ENCODE measurements at regions of chr16 and their contacts with region 1.

Region 1: GRCh38 chr16:27313422-27314160 is at the start of gene IL4R:
- DNase-seq: peak; percentile 82
- H3K4me3 Mint-ChIP-seq: peak within 1 kb of the TSS; percentile 82
- H3K27ac Mint-ChIP-seq: peak within 1 kb of the TSS; percentile 80
- H3K4me1 Mint-ChIP-seq: peaks cover 58% of the 10 kb centered on the region
- H3K27me3 Mint-ChIP-seq: no peaks in the 10 kb centered on the region
- CTCF ChIP-seq: no peak
- total RNA-seq, gene IL4R: 99.0 and 108 TPM in 2 replicates

Region 2: GRCh38 chr16:27235055-27235937 is 78.3 kb before region 1 on chr16:
- CTCF ChIA-PET with region 1: interaction called, 6 read pairs
- intact Hi-C with region 1: loop called (anchors 1 kb)
- DNase-seq: peak; percentile 53
- H3K4me3 Mint-ChIP-seq: no peak overlapping the region
- H3K27ac Mint-ChIP-seq: peak overlapping the region; percentile 57
- H3K4me1 Mint-ChIP-seq: peaks cover 24% of the 10 kb centered on the region
- H3K27me3 Mint-ChIP-seq: no peaks in the 10 kb centered on the region
- CTCF ChIP-seq: peak; percentile 69

Region 3: GRCh38 chr16:27268376-27269299 is 45.0 kb before region 1 on chr16 and contains the start of gene NSMCE1:
- CTCF ChIA-PET with region 1: interaction called, 3 read pairs
- intact Hi-C with region 1: loop called (anchors 2 kb)
- DNase-seq: peak; percentile 98
- H3K4me3 Mint-ChIP-seq: peak within 1 kb of the TSS; percentile 91
- H3K27ac Mint-ChIP-seq: peak within 1 kb of the TSS; percentile 97
- H3K4me1 Mint-ChIP-seq: peaks cover 57% of the 10 kb centered on the region
- H3K27me3 Mint-ChIP-seq: no peaks in the 10 kb centered on the region
- CTCF ChIP-seq: peak; percentile 32
- total RNA-seq, gene NSMCE1: 74.9 and 83.2 TPM in 2 replicates

Region 4: GRCh38 chr16:27326738-27327585 is 13.4 kb after region 1 on chr16:
- CTCF ChIA-PET with region 1: interaction called, 9 read pairs
- intact Hi-C with region 1: loop called (anchors 1 kb)
- DNase-seq: peak; percentile 85
- H3K4me3 Mint-ChIP-seq: peak overlapping the region; percentile 61
- H3K27ac Mint-ChIP-seq: peak overlapping the region; percentile 94
- H3K4me1 Mint-ChIP-seq: peaks cover 71% of the 10 kb centered on the region
- H3K27me3 Mint-ChIP-seq: no peaks in the 10 kb centered on the region
- CTCF ChIP-seq: no peak

Region 5: GRCh38 chr16:28211712-28212534 is 898.3 kb after region 1 on chr16 and contains the start of gene XPO6:
- CTCF ChIA-PET with region 1: no interaction called
- intact Hi-C with region 1: loop called (anchors 10 kb)
- DNase-seq: peak; percentile 99
- H3K4me3 Mint-ChIP-seq: peak within 1 kb of the TSS; percentile 87
- H3K27ac Mint-ChIP-seq: peak within 1 kb of the TSS; percentile 72
- H3K4me1 Mint-ChIP-seq: peaks cover 26% of the 10 kb centered on the region
- H3K27me3 Mint-ChIP-seq: no peaks in the 10 kb centered on the region
- CTCF ChIP-seq: no peak
- total RNA-seq, gene XPO6: 149 and 153 TPM in 2 replicates

Measured in Calu3 (cell line).